ENCODE measurements at regions of chr12 and their contacts with region 1.

Region 1: GRCh38 chr12:90042920-90043641 is 334.4 kb upstream of the ATP2B1 start:
- DNase-seq: no peak
- H3K4me3 Mint-ChIP-seq: no peak overlapping the region
- H3K27ac Mint-ChIP-seq: no peak overlapping the region
- H3K4me1 Mint-ChIP-seq: peaks cover 12% of the 10 kb centered on the region
- H3K27me3 Mint-ChIP-seq: no peaks in the 10 kb centered on the region

Region 2: DNA sequence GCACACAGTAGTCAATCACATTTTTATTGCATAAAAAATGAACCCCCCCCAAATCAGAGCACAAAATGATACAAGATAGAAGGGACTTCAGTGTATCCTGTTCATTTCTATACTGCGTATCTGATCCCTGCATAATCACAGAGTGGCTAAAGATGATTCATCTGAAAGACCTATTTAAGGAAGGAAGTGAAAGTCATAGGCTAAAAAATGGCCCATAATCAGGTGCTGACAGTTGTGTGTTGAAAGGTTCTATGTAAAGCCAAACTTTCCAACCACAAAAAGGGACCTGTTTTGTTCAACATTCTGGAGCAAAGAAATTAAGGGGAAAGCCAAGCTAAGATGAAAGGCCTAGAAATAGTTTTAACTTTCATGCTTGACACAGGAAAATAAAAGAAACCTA is 186.7 kb before region 1 on chr12:
- intact Hi-C with region 1: loop called (anchors 5 kb)
- DNase-seq: peak; percentile 62
- H3K4me3 Mint-ChIP-seq: peak overlapping the region; percentile 3
- H3K27ac Mint-ChIP-seq: peak overlapping the region; percentile 56
- H3K4me1 Mint-ChIP-seq: peaks cover 42% of the 10 kb centered on the region
- H3K27me3 Mint-ChIP-seq: peaks cover 2% of the 10 kb centered on the region

Region 3: GRCh38 chr12:89977405-89978085 is 65.5 kb before region 1 on chr12:
- intact Hi-C with region 1: no loop called
- DNase-seq: no peak
- H3K4me3 Mint-ChIP-seq: no peak overlapping the region
- H3K27ac Mint-ChIP-seq: no peak overlapping the region
- H3K4me1 Mint-ChIP-seq: peaks cover 3% of the 10 kb centered on the region
- H3K27me3 Mint-ChIP-seq: no peaks in the 10 kb centered on the region

Region 4: DNA sequence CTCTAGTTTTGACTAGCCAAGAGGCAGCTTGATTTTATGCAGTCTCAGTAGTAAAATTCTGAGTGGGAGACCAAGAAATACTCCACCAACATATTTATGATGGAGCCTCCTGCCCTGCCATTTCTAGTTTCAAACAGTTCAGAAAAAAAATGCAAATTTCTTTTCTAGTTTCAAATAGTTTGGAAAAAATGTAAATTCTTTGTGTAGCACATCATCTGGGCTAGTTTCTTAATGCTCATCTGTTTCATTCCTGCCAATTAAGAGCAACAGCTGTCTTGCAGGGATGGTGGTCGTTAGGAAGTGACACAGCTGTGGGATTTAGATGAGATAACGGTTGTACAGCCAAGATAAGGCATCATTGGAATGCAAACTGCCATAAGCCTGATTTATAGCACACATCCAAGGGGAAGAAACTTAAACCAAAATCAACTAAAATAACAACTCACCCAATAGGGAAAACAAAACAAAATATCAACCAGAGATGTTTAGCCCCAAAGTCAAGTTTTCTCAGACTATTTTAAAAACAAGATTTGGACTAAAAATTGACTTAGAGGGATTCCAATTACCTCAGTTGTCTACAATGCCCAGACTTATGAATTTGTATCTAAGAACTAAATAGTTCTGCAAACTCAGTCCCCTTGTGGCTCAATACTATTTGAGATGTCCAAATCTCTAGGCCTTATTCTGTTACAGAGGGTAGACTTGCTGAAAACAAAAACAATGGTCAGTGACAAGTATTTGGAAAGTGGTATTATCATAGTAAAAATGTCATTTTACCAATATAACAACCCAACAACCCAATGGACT is 43.2 kb before region 1 on chr12:
- intact Hi-C with region 1: no loop called
- DNase-seq: no peak
- H3K4me3 Mint-ChIP-seq: no peak overlapping the region
- H3K27ac Mint-ChIP-seq: no peak overlapping the region
- H3K4me1 Mint-ChIP-seq: peaks cover 2% of the 10 kb centered on the region
- H3K27me3 Mint-ChIP-seq: peaks cover 6% of the 10 kb centered on the region

Region 5: DNA sequence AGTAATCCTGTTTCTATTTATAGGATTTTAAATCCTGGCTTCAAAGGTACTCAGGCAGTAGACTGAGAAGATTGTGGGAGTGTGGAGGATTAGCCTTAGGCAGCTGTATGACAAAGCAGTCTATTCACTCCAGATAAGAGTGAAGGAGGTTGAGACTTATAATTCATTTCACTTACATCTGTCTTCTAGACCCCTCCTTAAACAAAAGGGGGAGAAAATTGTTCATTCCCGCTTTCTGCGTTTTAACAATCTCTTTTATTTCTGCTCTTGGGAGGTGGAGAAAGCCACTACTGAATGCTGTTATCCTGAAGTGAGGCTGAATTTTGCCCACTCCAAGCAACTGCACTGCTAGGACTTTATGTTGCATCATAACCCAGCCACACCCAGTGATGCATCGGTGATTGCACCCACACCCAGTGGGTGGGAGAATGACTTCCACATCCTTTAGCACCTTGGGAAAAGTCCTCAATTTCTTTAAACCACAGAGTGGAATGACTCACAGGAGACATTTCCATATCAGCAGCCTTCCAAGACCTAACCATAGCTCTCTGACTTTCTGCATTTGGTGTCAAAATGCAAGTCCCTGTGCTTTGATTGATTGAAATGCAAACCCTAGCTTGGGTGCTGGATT is 48.1 kb after region 1 on chr12:
- intact Hi-C with region 1: loop called (anchors 2 kb)
- DNase-seq: peak; percentile 67
- H3K4me3 Mint-ChIP-seq: no peak overlapping the region
- H3K27ac Mint-ChIP-seq: peak overlapping the region; percentile 12
- H3K4me1 Mint-ChIP-seq: peaks cover 11% of the 10 kb centered on the region
- H3K27me3 Mint-ChIP-seq: no peaks in the 10 kb centered on the region

Measured in activated CD4-positive, alpha-beta T cell treated with anti-CD3 and anti-CD28 coated beads, Interleukin-2, amount 10 ng/mL, durations not matched to agents 24 days and 14 days (primary cell).